ENCODE measurements at regions of chr19 and their contacts with region 1.

Region 1: DNA sequence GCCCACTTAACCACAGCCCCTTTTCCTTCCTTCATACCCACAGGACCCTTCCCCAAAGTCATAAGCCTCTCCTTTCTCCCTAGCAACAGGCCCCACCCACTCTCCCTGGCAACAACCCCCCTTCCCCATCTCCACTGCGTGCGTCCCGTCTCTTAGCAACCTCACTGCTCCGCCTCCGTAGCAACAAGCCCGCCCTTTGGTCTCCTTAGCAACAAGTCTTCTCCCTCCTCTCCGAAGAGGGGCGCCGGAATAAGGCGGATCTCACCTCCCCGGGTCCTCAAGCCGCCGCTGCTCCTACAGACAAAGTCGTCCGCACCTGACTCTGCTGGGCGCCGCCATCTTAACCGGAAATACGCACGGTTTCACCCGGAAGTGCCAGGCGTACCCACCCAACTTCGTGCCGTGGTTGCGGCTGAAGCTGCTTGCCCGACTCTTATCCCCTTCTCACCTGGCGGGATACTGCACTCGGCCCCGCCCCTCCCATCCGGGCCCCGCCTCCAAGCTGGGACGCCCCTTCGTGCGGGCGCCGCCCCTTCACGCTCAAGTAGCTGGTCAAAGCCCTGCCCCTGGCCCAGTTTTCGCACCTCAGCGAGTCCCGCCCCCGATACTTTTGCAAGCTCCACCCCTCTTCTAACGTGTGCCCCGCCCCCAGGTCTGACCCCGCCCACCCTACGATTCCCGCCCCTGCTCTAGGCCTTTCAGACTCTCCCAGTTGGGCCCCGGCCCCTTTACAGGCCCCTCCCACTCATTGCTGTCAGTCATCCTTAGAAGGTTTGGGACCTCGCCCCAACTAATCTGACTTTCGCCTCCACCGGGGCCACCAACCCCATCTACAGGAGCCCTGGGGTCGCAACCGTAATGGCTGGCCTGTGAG is at the start of gene HSPBP1:
- DNase-seq: peak; percentile 97
- H3K4me3 ChIP-seq: peak within 1 kb of the TSS; percentile 62 to 94 (median 69)
- H3K27ac ChIP-seq: peak within 1 kb of the TSS; percentile 81
- H3K4me1 ChIP-seq: peaks cover 5% of the 10 kb centered on the region
- H3K27me3 ChIP-seq: no peaks in the 10 kb centered on the region
- CTCF ChIP-seq: no peak
- total RNA-seq, gene HSPBP1: 27.5 to 42.9 TPM

Region 2: GRCh38 chr19:55166530-55167268 is 113.3 kb before region 1 on chr19 and contains the start of gene DNAAF3:
- CTCF ChIA-PET with region 1: no interaction called
- dilution Hi-C with region 1: no loop called
- in situ Hi-C with region 1: no loop called
- intact Hi-C with region 1: loop called (anchors 5 kb)
- DNase-seq: peak; percentile 97
- H3K4me3 ChIP-seq: peak within 1 kb of the TSS; percentile 49 to 67 (median 61)
- H3K27ac ChIP-seq: peak within 1 kb of the TSS; percentile 69
- H3K4me1 ChIP-seq: peaks cover 9% of the 10 kb centered on the region
- H3K27me3 ChIP-seq: peaks cover 2% of the 10 kb centered on the region
- CTCF ChIP-seq: no peak
- total RNA-seq, gene DNAAF3: 1.5 to 2.2 TPM

Region 3: GRCh38 chr19:55339048-55339888 is 59.3 kb after region 1 on chr19 and contains the start of gene KMT5C:
- CTCF ChIA-PET with region 1: no interaction called
- dilution Hi-C with region 1: no loop called
- in situ Hi-C with region 1: no loop called
- intact Hi-C with region 1: loop called (anchors 2 kb)
- DNase-seq: peak; percentile 100
- H3K4me3 ChIP-seq: peak within 1 kb of the TSS; percentile 48 to 83 (median 61)
- H3K27ac ChIP-seq: peak within 1 kb of the TSS; percentile 99
- H3K4me1 ChIP-seq: peaks cover 48% of the 10 kb centered on the region
- H3K27me3 ChIP-seq: no peaks in the 10 kb centered on the region
- CTCF ChIP-seq: peak in 1 of 2 donors; percentile 46
- total RNA-seq, gene KMT5C: 15.6 to 18.8 TPM

Measured in mammary epithelial cell (primary cell).